Activated T-helper 2 cell treated with anti-CD3 and anti-CD28 coated beads, Interferon-gamma antibody, Interleukin-2, Interleukin-4, amounts not matched to agents 10 μg/mL and 5 μg/mL and 100 μg/mL, durations not matched to agents 14 hours and 24 hours and 36 hours (primary cell): ENCODE measurements at regions of chr17 and their contacts with region 1.

Region 1: DNA sequence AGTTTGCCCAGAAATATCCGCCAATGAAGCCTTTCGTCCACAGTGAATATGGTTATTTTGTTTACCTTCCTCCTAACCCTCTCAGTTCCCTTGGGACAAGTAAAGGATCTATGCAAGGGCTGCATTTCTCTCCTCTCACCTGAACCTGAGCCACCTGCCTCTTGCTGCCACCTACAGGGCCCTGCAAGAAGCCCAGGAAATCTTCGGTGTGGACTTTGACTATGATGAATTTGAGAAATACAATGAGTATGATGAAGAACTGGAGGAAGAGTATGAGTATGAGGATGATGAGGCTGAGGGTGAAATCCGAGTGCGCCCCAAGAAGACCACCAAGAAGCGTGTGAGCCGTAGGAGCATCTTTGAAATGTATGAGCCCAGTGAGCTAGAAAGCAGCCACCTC is 14.0 kb downstream of the SUPT6H start:
- DNase-seq: no peak
- H3K4me3 Mint-ChIP-seq: no peak overlapping the region
- H3K27ac Mint-ChIP-seq: no peak overlapping the region
- H3K4me1 Mint-ChIP-seq: no peaks in the 10 kb centered on the region
- H3K27me3 Mint-ChIP-seq: no peaks in the 10 kb centered on the region

Region 2: DNA sequence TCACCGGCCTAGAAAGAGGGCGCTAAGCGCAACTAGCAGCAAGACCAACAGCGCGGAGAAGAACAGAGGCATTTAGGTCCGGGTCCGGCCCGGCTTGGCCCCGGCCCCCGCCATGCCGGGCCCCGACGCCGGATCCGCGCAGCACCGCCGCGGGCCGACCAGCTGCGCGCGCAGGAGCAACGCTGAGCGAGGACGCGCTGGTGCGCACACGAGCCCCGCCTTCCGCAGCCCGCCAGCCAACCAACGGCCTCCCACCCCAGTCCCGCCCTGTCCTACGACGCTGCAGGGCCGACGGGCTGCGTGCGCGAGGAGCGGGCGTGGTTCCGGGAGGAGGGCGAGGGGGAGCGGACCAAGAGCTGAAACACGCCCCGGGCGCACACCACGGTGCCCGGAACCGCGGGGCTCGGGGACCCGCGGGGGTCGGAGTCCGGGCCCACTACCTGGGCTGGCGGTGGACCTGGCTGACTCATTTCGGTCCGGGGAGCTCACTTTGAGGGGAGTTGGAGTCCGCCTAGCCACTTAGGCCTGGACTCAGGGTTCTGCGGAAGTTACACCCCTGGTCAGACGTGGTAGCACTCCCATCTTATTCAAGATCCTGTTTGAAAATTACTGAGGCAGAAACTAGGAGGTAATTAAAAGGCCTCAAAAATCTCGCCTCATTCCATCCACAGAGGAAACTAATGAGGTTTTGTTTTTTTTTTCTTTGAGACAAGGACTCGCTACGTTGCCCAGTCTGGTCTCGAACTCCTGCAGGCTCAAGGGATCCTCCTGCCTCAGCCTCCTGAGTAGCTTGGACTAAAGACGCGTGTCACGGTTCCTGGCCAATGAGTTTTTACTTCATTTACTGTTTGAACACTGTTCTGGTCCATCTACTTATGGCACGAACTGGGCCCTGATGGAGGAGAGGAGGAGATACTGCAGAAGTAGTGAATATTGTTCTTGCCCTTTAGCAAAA is 30.7 kb before region 1 on chr17 and contains the start of gene BLTP2:
- intact Hi-C with region 1: loop called (anchors 1 kb)
- DNase-seq: peak; percentile 94
- H3K4me3 Mint-ChIP-seq: peak within 1 kb of the TSS; percentile 94
- H3K27ac Mint-ChIP-seq: peak within 1 kb of the TSS; percentile 86
- H3K4me1 Mint-ChIP-seq: peaks cover 35% of the 10 kb centered on the region
- H3K27me3 Mint-ChIP-seq: no peaks in the 10 kb centered on the region
- total RNA-seq, gene BLTP2: 196 and 213 TPM in 2 replicates